ENCODE measurements at regions of chr7 and their contacts with region 1.

Region 1: GRCh38 chr7:55018361-55019190 is at the start of gene EGFR:
- DNase-seq: peak; percentile 80
- H3K4me3 Mint-ChIP-seq: peak within 1 kb of the TSS; percentile 86
- H3K27ac Mint-ChIP-seq: peak within 1 kb of the TSS; percentile 93
- H3K4me1 Mint-ChIP-seq: no peaks in the 10 kb centered on the region
- H3K27me3 Mint-ChIP-seq: no peaks in the 10 kb centered on the region
- CTCF ChIP-seq: no peak
- total RNA-seq, gene EGFR: 371 and 448 TPM in 2 replicates

Region 2: GRCh38 chr7:54788664-54789063 is 229.9 kb before region 1 on chr7:
- CTCF ChIA-PET with region 1: no interaction called
- POLR2A ChIA-PET with region 1: interaction called, 4 read pairs
- intact Hi-C with region 1: loop called (anchors 2 kb)
- DNase-seq: peak; percentile 65
- H3K4me3 Mint-ChIP-seq: no peak overlapping the region
- H3K27ac Mint-ChIP-seq: peak overlapping the region; percentile 49
- H3K4me1 Mint-ChIP-seq: peaks cover 6% of the 10 kb centered on the region
- H3K27me3 Mint-ChIP-seq: no peaks in the 10 kb centered on the region
- CTCF ChIP-seq: peak; percentile 54

Region 3: GRCh38 chr7:54904130-54904529 is 114.4 kb before region 1 on chr7:
- CTCF ChIA-PET with region 1: interaction called, 3 read pairs
- POLR2A ChIA-PET with region 1: interaction called, 22 read pairs
- intact Hi-C with region 1: no loop called
- DNase-seq: peak; percentile 39
- H3K4me3 Mint-ChIP-seq: no peak overlapping the region
- H3K27ac Mint-ChIP-seq: peak overlapping the region; percentile 25
- H3K4me1 Mint-ChIP-seq: peaks cover 8% of the 10 kb centered on the region
- H3K27me3 Mint-ChIP-seq: no peaks in the 10 kb centered on the region
- CTCF ChIP-seq: no peak

Region 4: GRCh38 chr7:54985405-54986330 is 32.9 kb before region 1 on chr7:
- CTCF ChIA-PET with region 1: interaction called, 5 read pairs
- POLR2A ChIA-PET with region 1: interaction called, 34 read pairs
- intact Hi-C with region 1: no loop called
- DNase-seq: peak; percentile 81
- H3K4me3 Mint-ChIP-seq: peak overlapping the region; percentile 51
- H3K27ac Mint-ChIP-seq: peak overlapping the region; percentile 97
- H3K4me1 Mint-ChIP-seq: peaks cover 16% of the 10 kb centered on the region
- H3K27me3 Mint-ChIP-seq: no peaks in the 10 kb centered on the region
- CTCF ChIP-seq: no peak

Region 5: DNA sequence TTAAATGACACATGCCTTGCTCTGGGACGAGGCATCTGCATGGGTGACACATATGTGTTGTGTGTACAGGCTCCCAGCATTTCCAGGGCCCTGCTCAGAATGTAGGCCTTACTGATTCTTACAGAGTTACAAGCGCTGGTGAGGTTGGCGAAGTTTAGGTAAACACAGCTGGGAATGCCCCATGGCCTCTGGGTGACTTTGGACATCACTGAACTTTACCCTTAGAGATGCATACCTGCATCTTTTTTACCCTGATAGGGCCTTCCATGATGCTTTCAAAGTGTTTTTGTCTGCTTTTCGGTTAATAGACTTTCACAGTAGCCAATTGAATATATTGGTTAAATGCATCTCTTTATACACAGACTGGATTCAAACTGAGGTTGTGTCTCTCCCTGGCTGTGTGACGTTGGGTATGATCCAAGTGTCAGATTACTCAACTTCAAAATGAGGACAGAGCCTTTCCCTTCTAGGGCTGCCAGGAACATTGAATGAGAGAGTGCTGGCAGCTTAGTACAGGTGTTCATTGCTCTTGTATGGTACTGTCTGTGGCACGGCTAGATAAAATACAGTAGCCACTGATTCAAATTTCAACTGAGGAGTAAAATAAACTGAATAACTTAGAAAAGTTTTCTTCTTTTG is 29.8 kb after region 1 on chr7:
- CTCF ChIA-PET with region 1: interaction called, 6 read pairs
- POLR2A ChIA-PET with region 1: interaction called, 122 read pairs
- intact Hi-C with region 1: no loop called
- DNase-seq: peak; percentile 86
- H3K4me3 Mint-ChIP-seq: no peak overlapping the region
- H3K27ac Mint-ChIP-seq: peak overlapping the region; percentile 49
- H3K4me1 Mint-ChIP-seq: peaks cover 66% of the 10 kb centered on the region
- H3K27me3 Mint-ChIP-seq: no peaks in the 10 kb centered on the region
- CTCF ChIP-seq: no peak

Region 6: DNA sequence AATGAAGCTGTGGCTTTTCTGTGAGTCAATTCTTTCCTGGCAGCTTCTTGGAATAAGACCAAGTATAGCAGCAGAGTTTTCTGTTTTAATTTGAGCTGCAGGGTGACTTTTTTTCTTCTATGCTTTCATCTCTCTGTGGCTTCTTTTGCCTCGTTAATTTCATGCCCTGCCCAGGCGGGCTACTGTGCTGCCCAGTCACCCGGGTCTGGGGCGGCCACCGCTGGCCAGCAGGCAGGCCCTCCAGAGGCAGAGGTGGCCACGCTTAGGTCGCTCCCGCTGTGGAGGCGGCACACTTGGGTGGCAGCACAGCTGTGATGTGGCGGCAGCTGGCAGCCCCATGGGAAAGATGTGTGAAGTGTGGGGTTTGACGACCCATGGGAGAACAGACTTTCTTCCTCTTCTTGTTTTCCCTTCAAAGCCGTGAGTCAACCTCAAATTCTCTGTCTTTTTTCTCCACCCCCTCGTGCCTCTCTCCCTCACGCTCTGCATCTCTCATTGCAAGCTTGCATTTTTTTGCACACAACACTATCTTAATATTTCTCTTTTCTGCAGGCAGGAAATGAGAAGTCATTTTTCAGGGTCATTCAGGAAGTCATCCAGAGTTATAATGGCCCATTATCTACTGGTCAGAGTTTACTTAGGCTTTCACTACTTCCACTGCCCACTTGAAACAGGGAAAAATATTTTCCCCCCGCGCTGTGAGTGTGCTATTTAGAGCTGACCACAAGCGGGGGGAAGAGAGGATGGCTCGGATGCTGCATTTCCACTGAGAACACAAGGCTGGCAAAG is 68.0 kb after region 1 on chr7:
- CTCF ChIA-PET with region 1: interaction called, 3 read pairs
- POLR2A ChIA-PET with region 1: interaction called, 12 read pairs
- intact Hi-C with region 1: loop called (anchors 5 kb)
- DNase-seq: peak; percentile 78
- H3K4me3 Mint-ChIP-seq: peak overlapping the region; percentile 68
- H3K27ac Mint-ChIP-seq: peak overlapping the region; percentile 54
- H3K4me1 Mint-ChIP-seq: peaks cover 58% of the 10 kb centered on the region
- H3K27me3 Mint-ChIP-seq: no peaks in the 10 kb centered on the region
- CTCF ChIP-seq: no peak

Region 7: GRCh38 chr7:55255496-55256435 is 237.2 kb after region 1 on chr7:
- CTCF ChIA-PET with region 1: interaction called, 11 read pairs
- POLR2A ChIA-PET with region 1: interaction called, 6 read pairs
- intact Hi-C with region 1: loop called (anchors 1 kb)
- DNase-seq: peak; percentile 81
- H3K4me3 Mint-ChIP-seq: peak overlapping the region; percentile 78
- H3K27ac Mint-ChIP-seq: peak overlapping the region; percentile 72
- H3K4me1 Mint-ChIP-seq: no peaks in the 10 kb centered on the region
- H3K27me3 Mint-ChIP-seq: peaks cover 12% of the 10 kb centered on the region
- CTCF ChIP-seq: peak; percentile 68

Region 8: DNA sequence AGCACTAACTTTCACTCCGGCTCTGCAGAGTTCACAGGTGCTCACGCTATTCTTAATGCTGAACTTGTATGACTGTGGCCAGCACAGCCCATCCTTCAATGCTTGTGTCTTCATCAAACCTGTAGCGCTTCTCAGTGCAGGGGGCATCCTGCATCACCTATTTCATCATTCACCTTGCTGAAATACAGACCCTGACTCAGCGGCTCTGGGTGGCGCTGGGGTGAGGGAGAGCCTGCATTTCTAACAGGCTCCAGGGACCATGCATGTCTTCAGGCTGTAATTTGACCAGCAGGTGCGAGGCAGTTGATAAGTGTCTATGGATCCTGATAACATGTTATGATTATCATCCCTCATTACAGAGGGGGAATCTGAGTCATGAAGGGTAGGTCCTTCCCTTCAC is 464.5 kb after region 1 on chr7:
- CTCF ChIA-PET with region 1: no interaction called
- POLR2A ChIA-PET with region 1: no interaction called
- intact Hi-C with region 1: no loop called
- DNase-seq: no peak
- H3K4me3 Mint-ChIP-seq: no peak overlapping the region
- H3K27ac Mint-ChIP-seq: no peak overlapping the region
- H3K4me1 Mint-ChIP-seq: no peaks in the 10 kb centered on the region
- H3K27me3 Mint-ChIP-seq: no peaks in the 10 kb centered on the region
- CTCF ChIP-seq: no peak

Region 9: DNA sequence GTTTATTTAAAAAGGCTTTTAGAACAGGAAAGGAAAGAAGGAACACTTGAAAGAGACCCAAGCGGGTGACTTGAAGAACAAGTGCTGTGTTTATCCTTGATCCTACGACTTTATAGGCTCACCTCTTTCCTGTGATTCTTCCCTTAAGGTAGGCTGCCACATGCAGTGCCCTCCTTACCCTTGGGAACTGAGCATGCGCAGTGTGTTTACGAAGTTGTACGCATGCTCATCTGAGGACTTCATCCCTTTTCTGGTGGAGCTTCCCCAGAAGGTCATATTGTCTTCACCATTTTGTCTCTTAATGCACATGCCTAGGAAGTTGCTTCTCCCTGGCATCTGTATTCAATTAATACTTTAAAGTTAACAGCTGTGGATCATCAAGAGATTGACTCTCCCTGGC is 603.7 kb after region 1 on chr7:
- CTCF ChIA-PET with region 1: no interaction called
- POLR2A ChIA-PET with region 1: no interaction called
- intact Hi-C with region 1: no loop called
- DNase-seq: no peak
- H3K4me3 Mint-ChIP-seq: no peak overlapping the region
- H3K27ac Mint-ChIP-seq: no peak overlapping the region
- H3K4me1 Mint-ChIP-seq: no peaks in the 10 kb centered on the region
- H3K27me3 Mint-ChIP-seq: no peaks in the 10 kb centered on the region
- CTCF ChIP-seq: no peak